ENCODE measurements at regions of chr1 and their contacts with region 1.

Region 1: GRCh38 chr1:53220171-53220961 is at the start of gene CZIB:
- DNase-seq: peak; percentile 92 to 96
- ATAC-seq: peak; percentile 92 to 97 (median 94)
- H3K4me3 ChIP-seq: peak within 1 kb of the TSS; percentile 97
- H3K4me3 Mint-ChIP-seq: peak within 1 kb of the TSS; percentile 91
- H3K27ac ChIP-seq: peak within 1 kb of the TSS; percentile 98
- H3K27ac Mint-ChIP-seq: peak within 1 kb of the TSS; percentile 90 to 97
- H3K4me1 ChIP-seq: peaks cover 16% of the 10 kb centered on the region
- H3K4me1 Mint-ChIP-seq: peaks cover 15 to 26% of the 10 kb centered on the region in 2 donors
- H3K27me3 ChIP-seq: no peaks in the 10 kb centered on the region
- H3K27me3 Mint-ChIP-seq: no peaks in the 10 kb centered on the region
- CTCF ChIP-seq: no peak
- total RNA-seq, gene CZIB: 39.6 to 49.7 (median 40.5) TPM

Region 2: GRCh38 chr1:53196485-53197270 is 23.7 kb before region 1 on chr1 and contains the start of gene CPT2:
- intact Hi-C with region 1: loop called (anchors 1 kb)
- DNase-seq: peak; percentile 89 to 94
- ATAC-seq: peak; percentile 97 to 99 (median 98)
- H3K4me3 ChIP-seq: peak within 1 kb of the TSS; percentile 76
- H3K4me3 Mint-ChIP-seq: peak within 1 kb of the TSS; percentile 92
- H3K27ac ChIP-seq: peak within 1 kb of the TSS; percentile 94
- H3K27ac Mint-ChIP-seq: peak within 1 kb of the TSS; percentile 94 to 95
- H3K4me1 ChIP-seq: peaks cover 19% of the 10 kb centered on the region
- H3K4me1 Mint-ChIP-seq: peaks cover 21 to 28% of the 10 kb centered on the region in 2 donors
- H3K27me3 ChIP-seq: no peaks in the 10 kb centered on the region
- H3K27me3 Mint-ChIP-seq: no peaks in the 10 kb centered on the region
- CTCF ChIP-seq: no peak
- total RNA-seq, gene CPT2: 7.6 to 11.8 (median 9.0) TPM

Measured in natural killer cell (primary cell).